Lower leg skin (tissue), 4 donors: ENCODE measurements at regions of chr4 and their contacts with region 1.

Region 1: GRCh38 chr4:174282836-174283506 is 496 bp downstream of the FBXO8 start:
- DNase-seq: peak; percentile 91 to 93
- H3K4me3 ChIP-seq: peak overlapping the region; percentile 78
- CTCF ChIP-seq: no peak
- POLR2A ChIP-seq: no peak

Region 2: GRCh38 chr4:172716291-172716690 is 1566.7 kb before region 1 on chr4:
- intact Hi-C with region 1: loop called (anchors 10 kb)
- DNase-seq: no peak
- H3K4me3 ChIP-seq: no peak overlapping the region
- CTCF ChIP-seq: no peak
- POLR2A ChIP-seq: no peak

Region 3: GRCh38 chr4:173138624-173139023 is 1144.3 kb before region 1 on chr4:
- intact Hi-C with region 1: no loop called
- DNase-seq: no peak
- H3K4me3 ChIP-seq: no peak overlapping the region
- CTCF ChIP-seq: no peak
- POLR2A ChIP-seq: no peak